ENCODE measurements at regions of chr6 and their contacts with region 1.

Region 1: GRCh38 chr6:41424370-41425058 is 89.1 kb downstream of the NCR2 start:
- DNase-seq: peak; percentile 85
- ATAC-seq: peak; percentile 50
- H3K4me3 ChIP-seq: no peak overlapping the region
- H3K4me3 Mint-ChIP-seq: no peak overlapping the region
- H3K27ac ChIP-seq: no peak overlapping the region
- H3K27ac Mint-ChIP-seq: no peak overlapping the region
- H3K4me1 ChIP-seq: peaks cover 28 to 36% of the 10 kb centered on the region in 2 donors
- H3K4me1 Mint-ChIP-seq: peaks cover 9% of the 10 kb centered on the region
- H3K27me3 ChIP-seq: peaks cover 0 to 14% (median 2%) of the 10 kb centered on the region in 4 experiments
- H3K27me3 Mint-ChIP-seq: peaks cover 10% of the 10 kb centered on the region
- CTCF ChIP-seq: peak; percentile 95

Region 2: DNA sequence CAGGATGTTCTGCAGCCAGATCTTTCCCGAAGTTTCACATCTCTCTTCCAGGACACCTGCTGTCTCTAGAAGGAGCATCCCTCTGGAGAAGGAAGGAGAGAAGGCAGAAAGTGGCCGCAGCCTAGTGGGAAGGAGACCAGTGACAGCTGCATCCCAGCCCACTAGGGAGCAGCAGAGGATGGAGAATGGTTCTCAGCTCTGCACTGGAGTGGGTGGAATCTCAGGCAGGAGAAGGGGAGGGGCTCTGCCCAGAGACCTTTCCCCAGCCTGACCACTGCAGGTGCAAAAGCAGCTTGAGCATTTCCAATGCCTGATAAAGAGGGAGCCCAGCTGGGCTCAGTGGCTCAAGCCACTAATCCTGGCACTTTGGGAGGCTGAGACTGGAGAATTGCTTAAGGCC is 56.8 kb before region 1 on chr6:
- CTCF ChIA-PET with region 1: interaction called, 3 read pairs
- POLR2A ChIA-PET with region 1: no interaction called
- intact Hi-C with region 1: loop called (anchors 2 kb)
- DNase-seq: no peak
- ATAC-seq: no peak
- H3K4me3 ChIP-seq: no peak overlapping the region
- H3K4me3 Mint-ChIP-seq: no peak overlapping the region
- H3K27ac ChIP-seq: no peak overlapping the region
- H3K27ac Mint-ChIP-seq: no peak overlapping the region
- H3K4me1 ChIP-seq: peaks cover 16 to 23% of the 10 kb centered on the region in 2 donors
- H3K4me1 Mint-ChIP-seq: peaks cover 22% of the 10 kb centered on the region
- H3K27me3 ChIP-seq: peaks cover 2 to 53% (median 23%) of the 10 kb centered on the region in 4 experiments
- H3K27me3 Mint-ChIP-seq: peaks cover 55% of the 10 kb centered on the region
- CTCF ChIP-seq: no peak

Region 3: GRCh38 chr6:41455818-41456217 is 31.3 kb after region 1 on chr6:
- CTCF ChIA-PET with region 1: interaction called, 34 read pairs
- POLR2A ChIA-PET with region 1: interaction called, 4 read pairs
- intact Hi-C with region 1: loop called (anchors 1 kb)
- DNase-seq: no peak
- ATAC-seq: no peak
- H3K4me3 ChIP-seq: no peak overlapping the region
- H3K4me3 Mint-ChIP-seq: no peak overlapping the region
- H3K27ac ChIP-seq: no peak overlapping the region
- H3K27ac Mint-ChIP-seq: no peak overlapping the region
- H3K4me1 ChIP-seq: no peaks in the 10 kb centered on the region
- H3K4me1 Mint-ChIP-seq: no peaks in the 10 kb centered on the region
- H3K27me3 ChIP-seq: peaks cover 0 to 20% (median 0%) of the 10 kb centered on the region in 4 experiments
- H3K27me3 Mint-ChIP-seq: peaks cover 5% of the 10 kb centered on the region
- CTCF ChIP-seq: no peak

Region 4: DNA sequence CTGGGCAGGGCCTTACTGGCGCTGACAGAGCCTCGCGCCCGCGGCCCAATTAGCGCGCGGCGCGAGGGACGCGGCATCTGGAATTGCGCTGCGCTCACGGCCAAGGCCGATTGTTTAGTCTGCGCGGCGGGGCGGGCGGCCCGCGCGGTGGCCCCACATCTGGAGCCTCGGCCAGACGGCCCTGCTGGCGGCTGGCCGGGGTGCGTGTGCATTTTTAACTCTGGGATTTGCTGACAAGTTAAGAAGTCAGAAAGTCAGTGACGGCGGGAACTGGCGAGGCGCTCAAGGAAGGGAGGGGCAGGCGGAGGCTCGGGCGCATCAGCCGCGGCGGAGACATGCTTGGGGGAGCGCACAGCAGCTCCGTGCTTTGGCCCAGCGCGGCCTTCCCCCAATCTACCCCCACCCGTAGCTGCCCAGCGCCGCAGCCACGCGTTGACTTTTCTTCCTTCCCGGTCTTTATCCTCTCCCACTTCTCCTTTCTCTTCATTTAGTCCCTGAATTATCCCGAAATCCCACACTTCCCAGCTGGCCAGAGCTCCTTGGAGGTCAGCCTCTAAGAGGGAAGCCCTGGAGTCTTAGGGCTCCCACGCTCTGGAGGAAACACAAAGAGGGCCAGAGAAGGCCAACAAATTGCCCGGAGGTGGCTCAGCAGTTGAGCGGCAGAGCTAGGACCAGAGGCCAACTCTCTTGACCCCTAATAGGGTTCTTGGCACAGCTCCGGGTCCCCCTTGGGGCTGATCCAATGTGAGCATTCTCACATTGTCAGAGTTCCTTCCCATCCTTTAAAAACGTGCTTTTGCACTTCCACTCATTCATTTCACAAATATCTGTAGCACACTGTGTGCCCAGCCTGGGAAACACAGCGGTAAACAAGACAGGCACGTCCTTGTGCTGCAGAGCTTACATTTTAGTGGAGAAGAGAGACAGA is 80.9 kb after region 1 on chr6:
- CTCF ChIA-PET with region 1: interaction called, 8 read pairs
- POLR2A ChIA-PET with region 1: no interaction called
- intact Hi-C with region 1: loop called (anchors 2 kb)
- DNase-seq: peak; percentile 85
- ATAC-seq: peak; percentile 92
- H3K4me3 ChIP-seq: peak overlapping the region in 4 of 5 experiments; percentile 32 to 77 (median 57)
- H3K4me3 Mint-ChIP-seq: peak overlapping the region; percentile 92
- H3K27ac ChIP-seq: peak overlapping the region; percentile 55 to 69
- H3K27ac Mint-ChIP-seq: peak overlapping the region; percentile 91
- H3K4me1 ChIP-seq: peaks cover 29 to 34% of the 10 kb centered on the region in 2 donors
- H3K4me1 Mint-ChIP-seq: peaks cover 37% of the 10 kb centered on the region
- H3K27me3 ChIP-seq: peaks cover 0 to 15% (median 3%) of the 10 kb centered on the region in 4 experiments
- H3K27me3 Mint-ChIP-seq: peaks cover 14% of the 10 kb centered on the region
- CTCF ChIP-seq: no peak

Region 5: GRCh38 chr6:41545703-41546474 is 121.4 kb after region 1 on chr6 and contains the start of gene FOXP4:
- CTCF ChIA-PET with region 1: interaction called, 11 read pairs
- POLR2A ChIA-PET with region 1: no interaction called
- intact Hi-C with region 1: loop called (anchors 1 kb)
- DNase-seq: peak; percentile 91
- ATAC-seq: peak; percentile 84
- H3K4me3 ChIP-seq: peak within 1 kb of the TSS; percentile 35 to 75 (median 70)
- H3K4me3 Mint-ChIP-seq: peak within 1 kb of the TSS; percentile 95
- H3K27ac ChIP-seq: peak within 1 kb of the TSS; percentile 11 to 32
- H3K27ac Mint-ChIP-seq: peak within 1 kb of the TSS; percentile 91
- H3K4me1 ChIP-seq: peaks cover 25 to 39% of the 10 kb centered on the region in 2 donors
- H3K4me1 Mint-ChIP-seq: peaks cover 33% of the 10 kb centered on the region
- H3K27me3 ChIP-seq: peaks cover 0 to 3% (median 0%) of the 10 kb centered on the region in 4 experiments
- H3K27me3 Mint-ChIP-seq: no peaks in the 10 kb centered on the region
- CTCF ChIP-seq: no peak
- total RNA-seq, gene FOXP4: 37.5 and 38.7 TPM in 2 replicates

Region 6: DNA sequence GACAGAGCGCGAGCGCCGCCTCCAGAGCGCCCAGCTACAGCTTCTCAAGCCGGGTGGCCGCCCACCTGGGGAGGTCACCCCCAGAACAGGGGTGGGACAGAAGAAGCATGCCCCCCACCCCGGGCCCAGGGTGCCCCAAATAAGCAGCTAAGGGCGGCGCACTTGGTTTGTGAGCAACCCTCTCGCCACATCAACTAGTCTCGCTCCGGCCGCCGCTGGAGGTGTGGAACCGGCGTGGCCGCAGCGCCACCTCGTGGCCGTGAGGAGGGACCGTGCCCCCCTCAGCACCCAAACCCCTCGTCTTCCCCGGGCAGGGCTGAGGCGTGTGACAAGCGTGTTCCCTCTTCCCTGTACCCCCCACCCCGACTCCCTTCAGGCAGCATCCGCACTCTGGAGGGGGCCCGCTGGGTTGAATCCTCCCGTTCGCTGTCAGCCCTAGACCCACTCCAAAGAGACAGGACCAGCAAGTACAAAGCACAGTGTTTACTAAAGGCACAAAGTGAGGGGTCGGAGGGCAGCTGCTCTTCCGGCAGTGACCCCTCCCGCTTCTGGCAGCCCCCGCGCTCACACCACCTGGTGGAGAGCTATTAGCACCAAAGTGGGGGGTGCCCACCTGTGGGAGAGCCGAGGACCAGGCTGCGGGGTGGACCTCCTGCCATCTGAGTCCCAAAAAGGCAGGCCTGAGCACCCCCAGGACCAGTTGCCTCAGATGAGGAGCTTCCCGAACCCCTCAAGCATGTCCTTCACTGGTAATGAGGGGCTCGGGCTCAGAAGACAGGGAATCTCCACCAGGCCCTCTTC is 259.2 kb after region 1 on chr6:
- CTCF ChIA-PET with region 1: interaction called, 3 read pairs
- POLR2A ChIA-PET with region 1: no interaction called
- intact Hi-C with region 1: loop called (anchors 1 kb)
- DNase-seq: peak; percentile 88
- ATAC-seq: peak; percentile 82
- H3K4me3 ChIP-seq: peak overlapping the region in 4 of 5 experiments; percentile 51 to 57 (median 52)
- H3K4me3 Mint-ChIP-seq: peak overlapping the region; percentile 66
- H3K27ac ChIP-seq: peak overlapping the region; percentile 29 to 46
- H3K27ac Mint-ChIP-seq: peak overlapping the region; percentile 86
- H3K4me1 ChIP-seq: peaks cover 9 to 26% of the 10 kb centered on the region in 2 donors
- H3K4me1 Mint-ChIP-seq: peaks cover 23% of the 10 kb centered on the region
- H3K27me3 ChIP-seq: no peaks in the 10 kb centered on the region
- H3K27me3 Mint-ChIP-seq: no peaks in the 10 kb centered on the region
- CTCF ChIP-seq: peak; percentile 90

Region 7: DNA sequence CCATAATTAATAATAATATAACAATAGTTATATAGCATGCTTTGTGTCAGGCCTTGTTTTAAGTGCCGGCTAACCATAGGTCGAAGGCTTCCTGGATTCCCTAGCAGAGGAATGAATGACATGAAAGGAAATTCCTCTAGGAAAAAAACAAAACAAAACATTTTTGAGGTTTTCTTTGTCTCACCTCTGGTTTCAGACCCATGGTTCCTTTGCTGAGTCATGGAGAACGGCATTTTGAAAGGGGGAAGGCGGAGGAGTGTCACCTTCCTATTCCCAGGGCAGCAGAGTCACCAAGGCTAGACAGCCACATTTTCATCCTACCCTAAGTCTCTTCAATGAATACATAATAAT is 542.4 kb after region 1 on chr6:
- CTCF ChIA-PET with region 1: no interaction called
- POLR2A ChIA-PET with region 1: no interaction called
- intact Hi-C with region 1: no loop called
- DNase-seq: no peak
- ATAC-seq: no peak
- H3K4me3 ChIP-seq: no peak overlapping the region
- H3K4me3 Mint-ChIP-seq: no peak overlapping the region
- H3K27ac ChIP-seq: no peak overlapping the region
- H3K27ac Mint-ChIP-seq: no peak overlapping the region
- H3K4me1 ChIP-seq: peaks cover 5 to 6% of the 10 kb centered on the region in 2 donors
- H3K4me1 Mint-ChIP-seq: peaks cover 32% of the 10 kb centered on the region
- H3K27me3 ChIP-seq: no peaks in the 10 kb centered on the region
- H3K27me3 Mint-ChIP-seq: no peaks in the 10 kb centered on the region
- CTCF ChIP-seq: no peak

Measured in B cell (primary cell).